Sigmoid colon (tissue), 7 donors: ENCODE measurements at regions of chr1 and their contacts with region 1.

Region 1: GRCh38 chr1:68615312-68615711 is 118.4 kb upstream of the DEPDC1 start:
- DNase-seq: no peak
- H3K4me3 ChIP-seq: no peak overlapping the region
- H3K27ac ChIP-seq: no peak overlapping the region
- H3K4me1 ChIP-seq: no peaks in the 10 kb centered on the region
- H3K27me3 ChIP-seq: no peaks in the 10 kb centered on the region
- CTCF ChIP-seq: no peak
- EP300 ChIP-seq: no peak
- POLR2A ChIP-seq: no peak

Region 2: GRCh38 chr1:68459796-68460195 is 155.5 kb before region 1 on chr1:
- intact Hi-C with region 1: no loop called
- DNase-seq: no peak
- H3K4me3 ChIP-seq: no peak overlapping the region
- H3K27ac ChIP-seq: no peak overlapping the region
- H3K4me1 ChIP-seq: no peaks in the 10 kb centered on the region
- H3K27me3 ChIP-seq: no peaks in the 10 kb centered on the region
- CTCF ChIP-seq: no peak
- EP300 ChIP-seq: no peak
- POLR2A ChIP-seq: no peak

Region 3: DNA sequence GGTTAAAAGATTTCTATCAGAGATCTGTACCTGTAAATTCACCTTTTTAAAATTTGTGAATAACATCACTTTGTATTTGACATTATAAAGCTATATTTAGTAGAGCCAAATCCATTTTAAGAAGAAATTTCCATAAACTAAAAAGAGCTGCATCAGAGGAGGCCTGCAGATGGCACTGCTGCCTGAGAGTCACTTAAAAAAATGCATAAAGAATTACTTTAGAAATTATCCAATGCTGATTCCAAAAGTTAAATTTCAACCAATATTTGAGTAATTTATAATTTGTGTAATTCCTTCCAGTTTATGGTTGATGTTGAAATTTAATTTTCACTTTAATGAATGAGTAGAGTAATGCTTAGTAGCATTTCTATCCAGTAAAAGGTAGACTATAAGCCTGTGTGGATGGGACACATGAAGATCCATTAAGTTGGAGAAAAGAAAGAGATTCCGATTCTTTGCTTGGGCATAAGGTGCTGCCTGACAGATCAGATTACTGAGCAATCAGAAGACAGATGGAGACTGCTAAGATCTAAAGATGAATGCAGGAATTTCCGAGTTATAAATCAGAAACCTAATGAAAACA is 144.8 kb before region 1 on chr1:
- intact Hi-C with region 1: no loop called
- DNase-seq: no peak
- H3K4me3 ChIP-seq: no peak overlapping the region
- H3K27ac ChIP-seq: no peak overlapping the region
- H3K4me1 ChIP-seq: no peaks in the 10 kb centered on the region
- H3K27me3 ChIP-seq: no peaks in the 10 kb centered on the region
- CTCF ChIP-seq: peak in 2 of 4 experiments; percentile 19 to 49
- EP300 ChIP-seq: no peak
- POLR2A ChIP-seq: no peak

Region 4: DNA sequence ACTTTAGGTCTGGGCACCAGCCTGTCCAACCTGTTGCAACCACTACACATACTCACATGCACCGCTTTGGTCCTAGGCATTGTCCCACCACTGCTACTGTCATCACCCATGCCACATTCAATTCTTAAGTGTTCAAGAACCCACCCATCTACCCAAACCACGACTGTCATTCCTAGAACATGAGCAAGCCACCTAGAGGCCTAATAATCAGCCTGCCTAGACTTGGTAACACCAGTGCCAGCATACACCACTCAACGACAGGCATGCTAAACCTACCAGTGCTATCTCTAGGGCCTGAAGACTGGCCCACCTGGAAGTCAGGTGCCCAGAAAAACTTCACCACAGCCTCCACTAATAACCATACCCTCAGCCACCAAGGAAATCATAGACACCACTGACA is 414.3 kb after region 1 on chr1:
- intact Hi-C with region 1: loop called (anchors 10 kb)
- DNase-seq: no peak
- H3K4me3 ChIP-seq: no peak overlapping the region
- H3K27ac ChIP-seq: no peak overlapping the region
- H3K4me1 ChIP-seq: no peaks in the 10 kb centered on the region
- H3K27me3 ChIP-seq: no peaks in the 10 kb centered on the region
- CTCF ChIP-seq: no peak
- EP300 ChIP-seq: no peak
- POLR2A ChIP-seq: no peak